ENCODE measurements at regions of chr3 and their contacts with region 1.

Region 1: DNA sequence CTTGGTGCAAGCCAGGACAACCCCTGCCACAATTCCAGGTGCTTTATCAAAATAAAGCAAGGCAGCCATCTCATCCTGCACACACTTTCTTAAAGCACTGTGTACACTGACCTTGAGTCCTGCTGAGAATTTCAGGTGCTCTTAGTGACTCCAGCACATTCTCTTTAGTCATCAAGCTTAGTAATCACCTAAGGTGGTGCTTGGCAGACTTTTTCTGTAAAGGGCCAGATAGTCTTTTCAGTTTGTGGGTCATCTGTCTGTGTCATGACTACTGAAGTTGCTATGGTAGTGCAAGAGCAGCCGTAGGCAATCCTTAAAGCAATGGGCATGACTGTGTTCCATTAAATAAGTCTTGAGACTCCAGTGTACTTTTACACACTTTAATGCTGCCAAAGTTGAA is 36.4 kb downstream of the RIOX2 start:
- DNase-seq: no peak
- ATAC-seq: no peak
- H3K4me3 Mint-ChIP-seq: no peak overlapping the region
- H3K27ac Mint-ChIP-seq: no peak overlapping the region
- H3K4me1 Mint-ChIP-seq: no peaks in the 10 kb centered on the region
- H3K27me3 Mint-ChIP-seq: no peaks in the 10 kb centered on the region
- CTCF ChIP-seq: no peak

Region 2: DNA sequence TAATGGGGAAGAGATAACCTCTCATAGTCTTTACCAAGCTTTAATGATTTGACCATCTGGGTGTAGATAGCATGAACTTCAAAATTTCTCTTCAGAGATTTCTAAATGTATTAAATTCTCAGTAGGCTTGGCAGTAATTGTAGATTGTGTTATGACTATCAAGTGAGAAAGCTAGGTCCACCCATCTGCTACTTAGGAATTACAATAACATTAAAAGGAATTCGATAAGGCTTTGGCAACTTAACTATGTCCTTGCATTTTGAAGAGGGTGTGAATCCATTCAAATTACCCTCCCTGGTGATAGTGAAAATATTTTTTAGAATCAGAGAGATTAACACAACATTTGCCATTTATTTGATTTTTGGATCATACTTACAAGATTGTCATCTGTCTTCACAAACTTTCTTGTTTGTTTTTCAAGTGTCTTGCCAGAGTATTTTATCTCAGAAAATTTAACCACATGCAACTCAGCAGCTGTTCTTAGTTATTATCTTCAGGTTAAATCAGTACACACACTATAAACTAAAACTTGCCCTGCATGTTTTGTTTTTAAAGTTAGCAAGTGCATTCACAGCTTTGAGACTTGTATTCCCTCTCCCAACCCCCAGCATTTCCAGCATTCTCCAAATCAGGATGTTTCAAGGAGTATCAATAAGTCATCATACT is 1633.0 kb after region 1 on chr3:
- CTCF ChIA-PET with region 1: no interaction called
- POLR2A ChIA-PET with region 1: no interaction called
- intact Hi-C with region 1: loop called (anchors 5 kb)
- DNase-seq: no peak
- ATAC-seq: no peak
- H3K4me3 Mint-ChIP-seq: no peak overlapping the region
- H3K27ac Mint-ChIP-seq: no peak overlapping the region
- H3K4me1 Mint-ChIP-seq: no peaks in the 10 kb centered on the region
- H3K27me3 Mint-ChIP-seq: peaks cover 2% of the 10 kb centered on the region
- CTCF ChIP-seq: no peak

Measured in activated B cell treated with CpG ODN at 0.5 μM for 24 hours (primary cell).